CD8-positive, alpha-beta T cell (primary cell): ENCODE measurements at regions of chr5 and their contacts with region 1.

Region 1: GRCh38 chr5:127313847-127314473 is 23.4 kb downstream of the MEGF10 start:
- DNase-seq: peak; percentile 41 to 79 (median 62)
- ATAC-seq: peak; percentile 65
- H3K4me3 ChIP-seq: no peak overlapping the region
- H3K4me3 Mint-ChIP-seq: no peak overlapping the region
- H3K27ac ChIP-seq: no peak overlapping the region
- H3K27ac Mint-ChIP-seq: no peak overlapping the region
- H3K4me1 ChIP-seq: no peaks in the 10 kb centered on the region
- H3K4me1 Mint-ChIP-seq: no peaks in the 10 kb centered on the region
- H3K27me3 ChIP-seq: no peaks in the 10 kb centered on the region
- H3K27me3 Mint-ChIP-seq: no peaks in the 10 kb centered on the region
- CTCF ChIP-seq: peak; percentile 79

Region 2: GRCh38 chr5:126656396-126657007 is 657.5 kb before region 1 on chr5:
- CTCF ChIA-PET with region 1: interaction called, 4 read pairs
- POLR2A ChIA-PET with region 1: no interaction called
- intact Hi-C with region 1: loop called (anchors 1 to 2 kb)
- DNase-seq: peak in 4 of 9 experiments; percentile 5 to 57 (median 30)
- ATAC-seq: no peak
- H3K4me3 ChIP-seq: no peak overlapping the region
- H3K4me3 Mint-ChIP-seq: no peak overlapping the region
- H3K27ac ChIP-seq: no peak overlapping the region
- H3K27ac Mint-ChIP-seq: no peak overlapping the region
- H3K4me1 ChIP-seq: no peaks in the 10 kb centered on the region
- H3K4me1 Mint-ChIP-seq: no peaks in the 10 kb centered on the region
- H3K27me3 ChIP-seq: no peaks in the 10 kb centered on the region
- H3K27me3 Mint-ChIP-seq: no peaks in the 10 kb centered on the region
- CTCF ChIP-seq: peak; percentile 83

Region 3: DNA sequence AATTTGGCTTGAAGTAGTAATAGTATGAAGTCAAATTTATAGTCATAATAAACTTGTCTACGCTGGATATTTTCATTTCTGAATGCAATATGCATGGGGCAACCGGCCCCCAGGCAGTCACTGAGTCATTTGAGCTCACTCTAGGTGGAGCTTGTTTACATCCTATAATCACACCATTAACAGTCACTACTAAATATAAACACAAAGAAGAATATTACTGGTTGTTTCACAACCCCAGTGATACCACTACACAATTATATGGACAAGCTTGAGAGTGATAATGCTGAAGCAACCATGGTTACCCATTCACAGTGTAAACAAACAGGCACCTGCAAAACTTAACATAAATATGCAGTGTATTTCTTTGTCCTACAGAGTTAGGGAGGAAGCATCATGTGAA is 352.3 kb before region 1 on chr5:
- CTCF ChIA-PET with region 1: no interaction called
- POLR2A ChIA-PET with region 1: no interaction called
- intact Hi-C with region 1: loop called in 1 of 2 experiments (anchors 5 kb)
- DNase-seq: no peak
- ATAC-seq: no peak
- H3K4me3 ChIP-seq: no peak overlapping the region
- H3K4me3 Mint-ChIP-seq: no peak overlapping the region
- H3K27ac ChIP-seq: no peak overlapping the region
- H3K27ac Mint-ChIP-seq: no peak overlapping the region
- H3K4me1 ChIP-seq: no peaks in the 10 kb centered on the region
- H3K4me1 Mint-ChIP-seq: peaks cover 3% of the 10 kb centered on the region
- H3K27me3 ChIP-seq: no peaks in the 10 kb centered on the region
- H3K27me3 Mint-ChIP-seq: no peaks in the 10 kb centered on the region
- CTCF ChIP-seq: no peak

Region 4: DNA sequence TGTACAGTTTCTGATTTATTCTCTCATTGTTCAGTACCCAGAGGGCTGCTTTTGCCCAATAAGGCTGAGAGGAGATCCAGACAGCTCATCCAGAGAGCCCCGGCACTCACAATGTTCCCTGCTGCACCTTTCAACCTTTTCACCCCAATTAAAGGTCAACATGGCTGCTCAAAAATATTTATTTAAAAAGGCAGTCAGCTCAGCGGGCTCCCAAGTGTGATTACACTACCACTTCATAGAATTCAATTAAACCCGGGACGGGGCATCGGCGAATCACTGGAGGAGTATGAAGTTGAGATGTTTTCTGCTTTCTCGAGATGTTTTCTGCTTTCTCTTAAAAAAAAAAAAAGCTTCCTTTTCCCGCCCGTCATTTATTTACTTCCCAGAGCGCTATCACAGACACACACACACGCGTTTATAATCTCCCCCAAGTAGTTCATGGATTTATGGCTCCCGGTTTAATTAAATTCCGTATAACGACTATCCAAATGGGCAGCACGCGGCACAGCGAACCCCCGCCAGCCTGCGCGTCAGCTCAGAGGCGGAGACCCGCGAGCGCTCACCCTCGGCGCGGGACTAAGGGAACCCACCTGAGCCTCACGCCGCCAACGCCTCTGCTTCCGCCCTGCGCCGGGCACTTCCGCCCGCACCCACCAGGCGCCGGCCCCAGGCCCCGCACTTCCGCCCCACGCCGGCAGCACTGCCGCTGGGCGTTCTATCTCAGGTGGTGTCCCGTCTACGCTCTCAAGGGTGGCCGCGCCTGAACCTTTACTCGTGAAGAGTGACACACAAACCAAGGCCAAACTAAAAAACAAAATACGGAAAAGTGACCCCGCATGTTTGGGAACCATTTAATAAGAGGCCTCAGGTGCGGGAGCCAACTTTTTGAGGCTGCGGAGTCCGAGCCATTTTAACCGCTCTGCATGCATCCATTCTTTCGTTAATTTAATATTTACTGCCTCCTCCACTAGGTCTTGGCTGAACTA is 240.8 kb before region 1 on chr5 and contains the start of gene C5orf63:
- CTCF ChIA-PET with region 1: no interaction called
- POLR2A ChIA-PET with region 1: no interaction called
- intact Hi-C with region 1: loop called in 1 of 2 experiments (anchors 10 kb)
- DNase-seq: peak; percentile 45 to 84 (median 59)
- ATAC-seq: peak; percentile 93
- H3K4me3 ChIP-seq: peak within 1 kb of the TSS; percentile 67 to 73
- H3K4me3 Mint-ChIP-seq: peak within 1 kb of the TSS; percentile 89
- H3K27ac ChIP-seq: peak within 1 kb of the TSS; percentile 62 to 68
- H3K27ac Mint-ChIP-seq: peak within 1 kb of the TSS; percentile 96
- H3K4me1 ChIP-seq: peaks cover 5% of the 10 kb centered on the region
- H3K4me1 Mint-ChIP-seq: peaks cover 26% of the 10 kb centered on the region
- H3K27me3 ChIP-seq: no peaks in the 10 kb centered on the region
- H3K27me3 Mint-ChIP-seq: no peaks in the 10 kb centered on the region
- CTCF ChIP-seq: no peak
- total RNA-seq, gene C5orf63: 4.8 TPM

Region 5: DNA sequence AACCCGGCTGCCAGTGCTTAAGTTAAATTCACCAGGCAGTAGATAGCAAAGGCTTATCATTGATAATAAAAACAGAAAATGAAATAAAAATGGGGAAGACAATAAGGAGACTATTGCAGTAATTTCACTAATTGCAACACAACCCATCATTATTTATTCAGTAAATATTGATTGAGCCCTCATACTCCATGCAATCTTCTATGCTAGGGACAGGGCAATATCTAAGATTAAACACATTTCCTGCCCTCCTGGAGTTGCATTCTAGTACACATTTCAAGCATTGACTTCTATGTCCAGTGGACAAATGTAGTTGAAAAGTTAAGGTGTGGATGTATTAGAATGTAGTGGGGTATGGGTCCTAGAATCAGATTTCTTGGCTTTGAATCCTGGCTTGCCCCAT is 10.6 kb before region 1 on chr5:
- CTCF ChIA-PET with region 1: interaction called, 11 read pairs
- POLR2A ChIA-PET with region 1: no interaction called
- intact Hi-C with region 1: no loop called
- DNase-seq: no peak
- ATAC-seq: no peak
- H3K4me3 ChIP-seq: no peak overlapping the region
- H3K4me3 Mint-ChIP-seq: no peak overlapping the region
- H3K27ac ChIP-seq: no peak overlapping the region
- H3K27ac Mint-ChIP-seq: no peak overlapping the region
- H3K4me1 ChIP-seq: no peaks in the 10 kb centered on the region
- H3K4me1 Mint-ChIP-seq: no peaks in the 10 kb centered on the region
- H3K27me3 ChIP-seq: no peaks in the 10 kb centered on the region
- H3K27me3 Mint-ChIP-seq: peaks cover 3% of the 10 kb centered on the region
- CTCF ChIP-seq: no peak

Region 6: GRCh38 chr5:127492854-127493738 is 179.1 kb after region 1 on chr5:
- CTCF ChIA-PET with region 1: interaction called, 6 read pairs
- POLR2A ChIA-PET with region 1: no interaction called
- intact Hi-C with region 1: loop called in 1 of 2 experiments (anchors 5 kb)
- DNase-seq: peak in 2 of 9 experiments; percentile 40 to 54
- ATAC-seq: peak; percentile 71
- H3K4me3 ChIP-seq: no peak overlapping the region
- H3K4me3 Mint-ChIP-seq: no peak overlapping the region
- H3K27ac ChIP-seq: no peak overlapping the region
- H3K27ac Mint-ChIP-seq: no peak overlapping the region
- H3K4me1 ChIP-seq: no peaks in the 10 kb centered on the region
- H3K4me1 Mint-ChIP-seq: no peaks in the 10 kb centered on the region
- H3K27me3 ChIP-seq: no peaks in the 10 kb centered on the region
- H3K27me3 Mint-ChIP-seq: peaks cover 27% of the 10 kb centered on the region
- CTCF ChIP-seq: peak; percentile 94